ENCODE measurements at regions of chr11 and their contacts with region 1.

Region 1: DNA sequence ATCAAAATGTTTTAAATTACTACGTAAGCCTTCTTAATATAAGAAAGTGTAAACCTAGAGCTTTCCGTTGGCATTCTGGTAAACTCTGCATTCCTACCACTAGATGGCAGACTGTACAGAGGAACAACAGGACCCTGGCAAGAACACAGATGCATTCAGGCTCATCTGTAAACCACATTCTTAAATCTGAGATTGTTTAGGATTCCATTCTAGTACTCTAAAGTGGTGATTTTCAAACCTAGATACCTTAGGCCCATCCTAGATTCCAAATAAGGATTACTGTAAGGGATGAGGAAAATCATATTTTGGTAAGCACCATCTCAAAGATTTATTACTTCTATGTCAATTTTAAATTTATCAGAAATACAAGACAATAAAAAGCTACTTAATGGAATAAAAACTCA is 26.9 kb downstream of the PICALM start:
- DNase-seq: peak; percentile 95
- H3K4me3 ChIP-seq: no peak overlapping the region
- H3K27ac ChIP-seq: peak overlapping the region; percentile 55
- H3K4me1 ChIP-seq: peaks cover 20% of the 10 kb centered on the region
- H3K27me3 ChIP-seq: no peaks in the 10 kb centered on the region
- CTCF ChIP-seq: peak; percentile 66
- POLR2A ChIP-seq: no peak

Region 2: GRCh38 chr11:85854557-85855340 is 187.2 kb before region 1 on chr11:
- CTCF ChIA-PET with region 1: interaction called, 3 read pairs
- POLR2A ChIA-PET with region 1: no interaction called
- dilution Hi-C with region 1: no loop called
- intact Hi-C with region 1: loop called (anchors 1 kb)
- DNase-seq: peak; percentile 94
- H3K4me3 ChIP-seq: peak overlapping the region; percentile 40 to 82 (median 49)
- H3K27ac ChIP-seq: peak overlapping the region; percentile 92
- H3K4me1 ChIP-seq: peaks cover 4% of the 10 kb centered on the region
- H3K27me3 ChIP-seq: no peaks in the 10 kb centered on the region
- CTCF ChIP-seq: peak; percentile 58 to 79
- POLR2A ChIP-seq: peak; percentile 65

Region 3: GRCh38 chr11:86014221-86014620 is 27.8 kb before region 1 on chr11:
- CTCF ChIA-PET with region 1: interaction called, 21 read pairs
- POLR2A ChIA-PET with region 1: no interaction called
- dilution Hi-C with region 1: no loop called
- intact Hi-C with region 1: no loop called
- DNase-seq: no peak
- H3K4me3 ChIP-seq: no peak overlapping the region
- H3K27ac ChIP-seq: no peak overlapping the region
- H3K4me1 ChIP-seq: no peaks in the 10 kb centered on the region
- H3K27me3 ChIP-seq: no peaks in the 10 kb centered on the region
- CTCF ChIP-seq: no peak
- POLR2A ChIP-seq: no peak

Region 4: GRCh38 chr11:86062719-86063118 is 20.7 kb after region 1 on chr11:
- CTCF ChIA-PET with region 1: interaction called, 89 read pairs
- POLR2A ChIA-PET with region 1: no interaction called
- dilution Hi-C with region 1: no loop called
- intact Hi-C with region 1: no loop called
- DNase-seq: peak; percentile 52
- H3K4me3 ChIP-seq: peak overlapping the region in 2 of 3 experiments; percentile 11 to 73
- H3K27ac ChIP-seq: peak overlapping the region; percentile 84
- H3K4me1 ChIP-seq: peaks cover 42% of the 10 kb centered on the region
- H3K27me3 ChIP-seq: no peaks in the 10 kb centered on the region
- CTCF ChIP-seq: no peak
- POLR2A ChIP-seq: no peak

Region 5: DNA sequence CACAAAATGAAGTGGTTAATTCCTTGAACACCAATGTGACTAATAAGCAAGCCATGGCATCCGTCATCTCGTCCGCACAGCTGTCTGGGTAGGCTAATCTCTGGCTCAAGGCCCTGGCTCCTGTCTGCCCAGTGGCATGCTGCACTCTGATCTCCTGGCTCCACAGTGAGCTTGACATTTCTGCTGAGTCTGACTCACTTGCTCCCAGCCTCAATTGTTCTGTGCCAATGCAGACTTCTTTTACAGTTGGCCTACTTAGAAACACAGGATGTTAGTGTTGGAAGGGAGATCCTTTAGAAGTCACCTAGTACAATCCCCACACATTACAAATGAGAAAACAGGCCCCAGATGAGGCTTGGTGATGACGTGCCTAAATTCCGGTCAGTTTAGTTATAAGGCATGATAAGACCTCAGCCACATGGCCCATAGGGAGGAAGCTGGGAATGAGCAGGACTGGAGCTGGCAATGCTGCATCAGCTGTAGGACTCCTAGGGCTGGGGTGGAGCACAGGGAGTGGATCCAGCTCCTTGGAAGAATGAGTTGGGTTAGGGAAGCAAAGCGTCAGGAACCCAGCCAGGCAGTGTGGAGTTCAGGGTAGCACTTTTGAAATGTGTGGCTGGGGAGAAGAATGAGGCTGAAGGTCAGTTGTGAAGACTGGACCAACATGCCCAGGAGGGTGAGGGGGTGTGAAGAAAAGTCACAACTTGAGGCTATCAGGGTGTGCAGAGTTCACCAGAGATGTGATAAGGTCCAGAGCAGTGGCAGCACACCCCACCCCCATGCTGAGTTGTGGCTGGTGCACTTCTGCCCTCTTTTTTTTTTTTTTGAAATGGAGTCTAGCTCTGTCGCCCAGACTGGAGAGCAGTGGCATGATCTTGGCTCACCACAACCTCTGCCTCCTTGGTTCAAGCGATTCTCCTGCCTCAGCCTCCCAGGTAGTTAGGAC is 132.4 kb after region 1 on chr11:
- CTCF ChIA-PET with region 1: interaction called, 38 read pairs
- POLR2A ChIA-PET with region 1: no interaction called
- dilution Hi-C with region 1: no loop called
- intact Hi-C with region 1: loop called (anchors 1 kb)
- DNase-seq: peak; percentile 100
- H3K4me3 ChIP-seq: no peak overlapping the region
- H3K27ac ChIP-seq: peak overlapping the region; percentile 97
- H3K4me1 ChIP-seq: peaks cover 39% of the 10 kb centered on the region
- H3K27me3 ChIP-seq: no peaks in the 10 kb centered on the region
- CTCF ChIP-seq: no peak
- POLR2A ChIP-seq: no peak

Region 6: DNA sequence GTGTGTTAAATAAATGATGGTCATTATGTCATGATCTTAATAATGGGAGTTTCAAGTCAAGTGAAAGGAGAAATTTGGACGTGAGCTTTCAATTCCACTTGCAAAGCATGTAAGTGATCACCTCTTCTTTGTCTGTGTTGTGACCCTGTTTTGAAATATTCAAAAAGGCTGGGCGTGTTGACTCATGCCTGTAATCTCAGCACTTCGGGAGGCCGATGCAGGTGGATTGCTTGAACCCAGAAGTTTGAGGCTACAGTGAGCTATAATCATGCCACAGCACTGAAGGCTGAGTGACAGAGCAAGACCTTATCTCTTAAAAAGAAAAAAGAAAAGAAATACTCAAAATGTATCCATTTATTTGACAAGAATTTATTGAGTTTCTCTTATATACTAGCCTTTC is 169.6 kb after region 1 on chr11:
- CTCF ChIA-PET with region 1: interaction called, 22 read pairs
- POLR2A ChIA-PET with region 1: interaction called, 3 read pairs
- dilution Hi-C with region 1: loop called (anchors 25 kb)
- intact Hi-C with region 1: no loop called
- DNase-seq: no peak
- H3K4me3 ChIP-seq: no peak overlapping the region
- H3K27ac ChIP-seq: no peak overlapping the region
- H3K4me1 ChIP-seq: no peaks in the 10 kb centered on the region
- H3K27me3 ChIP-seq: no peaks in the 10 kb centered on the region
- CTCF ChIP-seq: no peak
- POLR2A ChIP-seq: no peak

Region 7: DNA sequence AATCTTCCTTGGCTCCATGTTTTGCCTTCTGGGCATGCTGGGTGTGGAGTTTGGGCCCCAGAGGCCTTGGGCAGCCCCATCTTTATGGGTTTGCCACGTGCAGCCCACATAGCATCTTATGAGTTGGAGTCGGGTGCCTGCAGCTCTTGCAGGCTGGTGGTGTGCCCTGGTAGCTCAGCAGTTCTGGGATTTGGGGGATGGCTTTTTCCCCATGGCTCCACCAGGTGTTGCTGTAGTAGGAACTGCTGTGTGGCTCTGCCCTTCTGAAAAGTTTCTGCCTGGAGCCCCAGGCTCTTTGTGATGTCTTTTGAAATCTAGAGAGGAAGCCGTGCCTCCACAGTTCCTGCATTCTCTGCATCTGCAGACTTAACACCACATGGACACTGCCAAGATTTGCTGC is 219.4 kb after region 1 on chr11:
- CTCF ChIA-PET with region 1: interaction called, 10 read pairs
- POLR2A ChIA-PET with region 1: no interaction called
- dilution Hi-C with region 1: no loop called
- intact Hi-C with region 1: no loop called
- DNase-seq: no peak
- H3K4me3 ChIP-seq: no peak overlapping the region
- H3K27ac ChIP-seq: no peak overlapping the region
- H3K4me1 ChIP-seq: no peaks in the 10 kb centered on the region
- H3K27me3 ChIP-seq: no peaks in the 10 kb centered on the region
- CTCF ChIP-seq: no peak
- POLR2A ChIP-seq: no peak